PC-3 (cell line): ENCODE measurements at regions of chr3 and their contacts with region 1.

Region 1: DNA sequence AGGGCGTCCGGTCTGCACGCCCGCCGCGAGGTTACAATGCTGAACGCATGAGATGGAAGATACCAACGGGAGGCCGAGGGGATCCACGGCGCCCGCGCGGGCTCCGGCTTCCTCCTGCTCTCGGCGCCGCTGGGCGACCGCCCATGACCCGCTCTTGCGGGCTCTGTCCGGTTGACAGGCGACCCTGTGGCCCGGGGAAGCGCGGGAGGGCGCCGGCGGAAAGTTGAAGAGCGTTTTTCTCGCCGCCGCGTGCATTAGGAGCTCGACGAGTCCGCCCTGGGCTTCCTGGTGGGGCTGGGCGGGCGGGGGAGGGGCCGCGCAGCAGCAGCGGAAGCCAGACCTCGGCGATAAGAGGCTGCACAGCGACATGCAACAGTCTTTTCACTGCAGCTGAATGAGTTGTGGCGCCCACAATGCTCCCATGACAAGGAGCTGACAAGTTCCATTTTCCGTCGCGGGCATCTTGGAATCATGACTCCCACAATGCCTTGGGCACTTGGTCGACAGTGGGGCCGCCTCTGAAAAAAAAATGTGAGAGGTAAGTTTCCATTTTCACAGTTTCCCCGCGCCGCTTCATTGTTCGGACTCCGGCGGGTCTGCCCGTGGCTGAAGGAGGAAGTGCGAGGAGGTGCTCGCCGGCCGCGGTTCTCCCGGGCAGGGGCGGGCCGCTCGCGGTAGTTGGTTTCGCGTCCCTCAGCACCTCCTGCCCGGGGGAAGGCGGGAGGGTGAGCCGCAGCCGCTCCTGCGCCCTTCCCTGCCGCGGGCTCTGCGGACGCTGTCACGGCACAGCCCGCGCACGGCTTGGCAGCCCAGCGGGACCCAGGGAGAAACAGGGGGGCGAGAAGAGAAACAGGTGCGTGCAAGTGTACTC is at the start of gene MBNL1:
- DNase-seq: peak; percentile 79
- ATAC-seq: peak; percentile 60
- H3K4me3 ChIP-seq: peak within 1 kb of the TSS; percentile 81
- H3K27ac ChIP-seq: peak within 1 kb of the TSS; percentile 94
- H3K4me1 ChIP-seq: peaks cover 48% of the 10 kb centered on the region
- H3K27me3 ChIP-seq: no peaks in the 10 kb centered on the region
- CTCF ChIP-seq: no peak
- total RNA-seq, gene MBNL1: 150 and 161 TPM in 2 replicates

Region 2: GRCh38 chr3:151976211-151977050 is 292.4 kb before region 1 on chr3:
- CTCF ChIA-PET with region 1: no interaction called
- POLR2A ChIA-PET with region 1: no interaction called
- intact Hi-C with region 1: loop called (anchors 5 kb)
- DNase-seq: peak; percentile 98
- ATAC-seq: peak; percentile 94
- H3K4me3 ChIP-seq: peak overlapping the region; percentile 30; the same call in 1 of the 2 replicates
- H3K27ac ChIP-seq: peak overlapping the region; percentile 88
- H3K4me1 ChIP-seq: peaks cover 58% of the 10 kb centered on the region
- H3K27me3 ChIP-seq: no peaks in the 10 kb centered on the region
- CTCF ChIP-seq: no peak; the same call in 1 of the 2 replicates

Region 3: DNA sequence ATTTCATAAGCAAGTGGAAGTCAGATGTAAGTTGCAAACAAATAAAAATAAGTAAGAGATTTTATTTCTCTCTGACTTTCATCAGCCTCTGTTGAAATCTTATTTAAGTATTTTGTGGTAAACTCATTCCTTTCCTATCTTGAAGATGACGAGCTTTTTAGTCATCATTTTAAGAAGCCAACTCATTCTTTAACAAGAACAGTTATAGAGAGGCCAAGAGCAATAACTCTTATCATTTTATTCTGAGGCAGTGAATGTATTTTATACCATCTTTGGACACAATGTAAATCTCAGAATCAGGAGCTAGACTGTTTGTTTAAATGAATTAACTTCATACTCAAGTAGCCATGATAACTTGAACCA is 147.5 kb before region 1 on chr3:
- CTCF ChIA-PET with region 1: no interaction called
- POLR2A ChIA-PET with region 1: interaction called, 5 read pairs
- intact Hi-C with region 1: loop called (anchors 1 kb)
- DNase-seq: peak; percentile 91
- ATAC-seq: peak; percentile 91
- H3K4me3 ChIP-seq: no peak overlapping the region
- H3K27ac ChIP-seq: peak overlapping the region; percentile 65
- H3K4me1 ChIP-seq: peaks cover 27% of the 10 kb centered on the region
- H3K27me3 ChIP-seq: no peaks in the 10 kb centered on the region
- CTCF ChIP-seq: no peak

Region 4: GRCh38 chr3:152227027-152227426 is 41.8 kb before region 1 on chr3:
- CTCF ChIA-PET with region 1: no interaction called
- POLR2A ChIA-PET with region 1: no interaction called
- intact Hi-C with region 1: no loop called
- DNase-seq: no peak
- ATAC-seq: no peak
- H3K4me3 ChIP-seq: no peak overlapping the region
- H3K27ac ChIP-seq: no peak overlapping the region
- H3K4me1 ChIP-seq: no peaks in the 10 kb centered on the region
- H3K27me3 ChIP-seq: no peaks in the 10 kb centered on the region
- CTCF ChIP-seq: no peak

Region 5: GRCh38 chr3:152281133-152281713 is 12.4 kb after region 1 on chr3:
- CTCF ChIA-PET with region 1: no interaction called
- POLR2A ChIA-PET with region 1: no interaction called
- intact Hi-C with region 1: loop called (anchors 1 kb)
- DNase-seq: no peak
- ATAC-seq: no peak
- H3K4me3 ChIP-seq: no peak overlapping the region
- H3K27ac ChIP-seq: no peak overlapping the region
- H3K4me1 ChIP-seq: peaks cover 12% of the 10 kb centered on the region; the same call in 1 of the 2 replicates
- H3K27me3 ChIP-seq: no peaks in the 10 kb centered on the region
- CTCF ChIP-seq: no peak

Region 6: DNA sequence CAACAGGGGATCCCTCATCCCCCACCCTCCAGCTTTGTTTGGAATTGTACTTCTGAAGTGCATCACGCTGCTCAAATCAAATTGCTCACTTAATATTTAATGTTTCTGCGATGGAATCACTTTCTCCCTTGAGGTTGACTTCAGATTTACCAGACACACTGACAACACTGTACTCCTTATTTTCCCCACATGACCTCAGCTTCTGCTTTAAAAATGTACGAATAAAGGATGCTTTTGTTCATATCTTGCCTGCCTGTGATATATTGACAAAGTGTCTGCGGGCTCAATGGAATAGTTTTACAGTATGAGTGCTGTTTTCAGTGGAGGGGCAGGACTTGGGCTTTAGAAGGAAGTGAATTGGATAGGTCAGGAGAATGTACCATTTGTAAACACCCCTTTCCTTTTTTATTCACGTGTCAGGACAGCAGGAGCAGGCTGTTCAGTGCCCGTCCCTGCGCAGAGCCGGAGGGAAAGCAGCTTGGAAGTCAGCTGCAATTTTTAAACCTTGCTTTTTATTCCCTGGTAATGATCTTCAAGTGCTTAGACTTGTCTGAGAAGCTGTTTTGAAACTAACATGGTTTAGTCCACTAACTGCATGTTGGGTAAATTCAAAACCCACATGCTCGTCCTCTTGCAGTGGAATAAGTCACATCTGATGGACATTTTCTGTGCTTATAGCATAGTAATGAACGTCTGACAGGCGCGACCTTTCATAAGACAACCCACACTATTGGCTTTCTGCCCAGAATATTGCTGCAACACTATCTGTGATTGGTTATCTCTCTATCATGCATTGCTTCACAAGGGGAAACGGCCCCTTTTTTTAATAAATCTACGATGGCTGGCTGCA is 29.8 kb after region 1 on chr3:
- CTCF ChIA-PET with region 1: no interaction called
- POLR2A ChIA-PET with region 1: no interaction called
- intact Hi-C with region 1: no loop called
- DNase-seq: peak; percentile 73
- ATAC-seq: peak; percentile 60
- H3K4me3 ChIP-seq: peak overlapping the region; percentile 29; the same call in 1 of the 2 replicates
- H3K27ac ChIP-seq: peak overlapping the region; percentile 73
- H3K4me1 ChIP-seq: peaks cover 39% of the 10 kb centered on the region
- H3K27me3 ChIP-seq: no peaks in the 10 kb centered on the region
- CTCF ChIP-seq: no peak

Region 7: GRCh38 chr3:152328841-152329240 is 60.1 kb after region 1 on chr3:
- CTCF ChIA-PET with region 1: no interaction called
- POLR2A ChIA-PET with region 1: interaction called, 19 read pairs
- intact Hi-C with region 1: loop called (anchors 1 kb)
- DNase-seq: peak; percentile 94
- ATAC-seq: peak; percentile 63
- H3K4me3 ChIP-seq: peak overlapping the region; percentile 52
- H3K27ac ChIP-seq: peak overlapping the region; percentile 93
- H3K4me1 ChIP-seq: peaks cover 58% of the 10 kb centered on the region
- H3K27me3 ChIP-seq: no peaks in the 10 kb centered on the region
- CTCF ChIP-seq: no peak

Region 8: GRCh38 chr3:152444029-152444641 is 175.3 kb after region 1 on chr3:
- CTCF ChIA-PET with region 1: no interaction called
- POLR2A ChIA-PET with region 1: no interaction called
- intact Hi-C with region 1: loop called (anchors 1 kb)
- DNase-seq: peak; percentile 78
- ATAC-seq: peak; percentile 45
- H3K4me3 ChIP-seq: no peak overlapping the region
- H3K27ac ChIP-seq: 0 out of 2 replicates have a peak overlapping the region, but pooled peaks have one; percentile 0
- H3K4me1 ChIP-seq: peaks cover 22% of the 10 kb centered on the region; the same call in 1 of the 2 replicates
- H3K27me3 ChIP-seq: no peaks in the 10 kb centered on the region
- CTCF ChIP-seq: peak; percentile 90